Heart left ventricle (tissue), 16 donors: ENCODE measurements at regions of chr10 and their contacts with region 1.

Region 1: GRCh38 chr10:86399879-86400704 is 33.5 kb upstream of the GRID1 start:
- DNase-seq: peak; percentile 92 to 97 (median 95)
- ATAC-seq: peak; percentile 79 to 95 (median 95)
- H3K4me3 ChIP-seq: peak overlapping the region; percentile 37 to 76 (median 62)
- H3K27ac ChIP-seq: peak overlapping the region in 11 of 12 donors; percentile 9 to 89 (median 61)
- H3K4me1 ChIP-seq: peaks cover 0 to 38% (median 26%) of the 10 kb centered on the region in 12 donors
- H3K27me3 ChIP-seq: peaks cover 0 to 19% (median 0%) of the 10 kb centered on the region in 9 donors
- CTCF ChIP-seq: peak; percentile 90 to 98 (median 96)
- POLR2A ChIP-seq: no peak

Region 2: DNA sequence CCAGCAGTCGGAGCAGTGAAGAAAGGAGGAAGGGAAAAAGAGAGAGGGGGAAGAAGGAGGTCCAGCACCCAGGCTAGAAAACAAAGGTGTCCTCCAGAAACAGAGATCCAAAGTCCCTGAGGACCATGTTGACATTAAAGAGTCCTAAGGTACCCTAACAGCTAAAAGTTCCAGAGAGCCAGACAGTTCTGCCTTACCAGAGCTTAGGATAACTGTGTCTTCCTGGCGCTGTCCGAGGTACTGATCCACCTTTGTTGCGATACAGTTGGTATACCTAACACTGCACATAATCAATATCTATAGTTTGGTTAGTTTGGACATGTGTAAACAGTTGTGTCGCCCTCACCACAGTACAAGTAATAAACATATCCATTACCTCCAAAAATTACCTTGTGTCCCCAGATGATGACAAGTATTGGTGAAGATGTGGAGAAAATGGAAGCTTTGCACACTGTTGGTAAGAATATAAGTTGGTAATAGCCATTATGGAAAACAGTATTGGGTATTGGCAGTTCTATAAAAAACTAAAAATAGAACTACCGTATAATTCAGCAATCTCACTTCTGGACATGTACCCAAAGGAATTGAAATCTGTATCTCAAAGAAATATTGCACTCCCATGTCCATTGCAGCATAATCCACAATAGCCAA is 93.3 kb before region 1 on chr10:
- intact Hi-C with region 1: no loop called
- DNase-seq: no peak
- ATAC-seq: no peak
- H3K4me3 ChIP-seq: no peak overlapping the region
- H3K27ac ChIP-seq: no peak overlapping the region
- H3K4me1 ChIP-seq: no peaks in the 10 kb centered on the region
- H3K27me3 ChIP-seq: no peaks in the 10 kb centered on the region
- CTCF ChIP-seq: no peak
- POLR2A ChIP-seq: no peak

Region 3: GRCh38 chr10:86472061-86472460 is 72.0 kb after region 1 on chr10:
- intact Hi-C with region 1: no loop called
- DNase-seq: no peak
- ATAC-seq: no peak
- H3K4me3 ChIP-seq: no peak overlapping the region
- H3K27ac ChIP-seq: no peak overlapping the region
- H3K4me1 ChIP-seq: no peaks in the 10 kb centered on the region
- H3K27me3 ChIP-seq: no peaks in the 10 kb centered on the region
- CTCF ChIP-seq: no peak
- POLR2A ChIP-seq: no peak

Region 4: DNA sequence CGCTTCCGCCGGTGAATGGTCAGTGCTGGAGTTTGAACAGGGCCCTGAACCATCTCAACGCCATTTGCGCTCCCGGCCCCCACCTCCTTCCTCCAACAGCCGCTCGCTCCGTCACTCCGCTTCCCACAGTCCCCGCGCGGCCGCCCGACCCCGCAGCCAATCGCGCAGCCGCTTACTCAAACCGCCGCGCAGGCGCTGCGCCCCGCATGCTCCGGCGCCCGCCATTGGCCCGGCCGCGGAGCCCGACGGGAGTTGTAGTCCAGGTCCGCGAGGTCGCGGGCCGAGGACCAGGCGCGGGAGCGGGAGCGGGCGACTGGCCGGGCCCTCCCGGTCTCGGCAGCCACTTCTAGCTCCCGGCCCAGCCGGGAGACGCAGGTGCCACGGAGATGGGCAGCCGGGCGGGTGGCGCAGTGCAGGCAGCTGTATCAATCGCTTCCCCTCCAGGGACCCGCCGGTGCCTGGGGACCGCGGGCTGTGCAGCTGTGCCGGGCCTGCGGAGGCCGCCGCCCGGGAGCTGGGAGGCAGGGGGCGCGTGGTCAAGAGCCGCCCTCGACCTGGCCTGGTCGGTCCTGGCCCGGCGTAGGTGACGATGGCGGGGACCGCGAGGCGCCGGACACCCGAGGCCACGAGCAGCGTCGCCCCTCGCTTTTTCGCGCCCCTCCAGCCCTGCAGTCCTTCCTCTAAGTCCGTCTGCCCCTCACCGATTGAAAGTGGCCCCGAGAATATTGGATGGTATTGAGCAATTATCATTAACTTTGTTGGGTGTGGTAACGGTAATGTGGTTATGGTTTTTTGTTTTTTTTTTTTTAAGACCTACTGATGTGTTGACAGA is 121.8 kb after region 1 on chr10 and contains the start of gene WAPL:
- intact Hi-C with region 1: loop called in 1 of 10 experiments (anchors 10 kb)
- DNase-seq: peak; percentile 96 to 97 (median 97)
- ATAC-seq: peak; percentile 97 to 99 (median 98)
- H3K4me3 ChIP-seq: peak within 1 kb of the TSS; percentile 83 to 100 (median 98)
- H3K27ac ChIP-seq: peak within 1 kb of the TSS; percentile 90 to 99 (median 97)
- H3K4me1 ChIP-seq: peaks cover 0 to 69% (median 43%) of the 10 kb centered on the region in 12 donors
- H3K27me3 ChIP-seq: no peaks in the 10 kb centered on the region
- CTCF ChIP-seq: no peak
- POLR2A ChIP-seq: peak in 1 of 2 donors; percentile 86
- total RNA-seq, gene WAPL: 19.7 to 29.9 (median 23.8) TPM

Region 5: GRCh38 chr10:86573941-86574340 is 173.8 kb after region 1 on chr10:
- intact Hi-C with region 1: loop called in 1 of 10 experiments (anchors 5 kb)
- DNase-seq: no peak
- ATAC-seq: no peak
- H3K4me3 ChIP-seq: no peak overlapping the region
- H3K27ac ChIP-seq: no peak overlapping the region
- H3K4me1 ChIP-seq: no peaks in the 10 kb centered on the region
- H3K27me3 ChIP-seq: no peaks in the 10 kb centered on the region
- CTCF ChIP-seq: no peak
- POLR2A ChIP-seq: no peak

Region 6: DNA sequence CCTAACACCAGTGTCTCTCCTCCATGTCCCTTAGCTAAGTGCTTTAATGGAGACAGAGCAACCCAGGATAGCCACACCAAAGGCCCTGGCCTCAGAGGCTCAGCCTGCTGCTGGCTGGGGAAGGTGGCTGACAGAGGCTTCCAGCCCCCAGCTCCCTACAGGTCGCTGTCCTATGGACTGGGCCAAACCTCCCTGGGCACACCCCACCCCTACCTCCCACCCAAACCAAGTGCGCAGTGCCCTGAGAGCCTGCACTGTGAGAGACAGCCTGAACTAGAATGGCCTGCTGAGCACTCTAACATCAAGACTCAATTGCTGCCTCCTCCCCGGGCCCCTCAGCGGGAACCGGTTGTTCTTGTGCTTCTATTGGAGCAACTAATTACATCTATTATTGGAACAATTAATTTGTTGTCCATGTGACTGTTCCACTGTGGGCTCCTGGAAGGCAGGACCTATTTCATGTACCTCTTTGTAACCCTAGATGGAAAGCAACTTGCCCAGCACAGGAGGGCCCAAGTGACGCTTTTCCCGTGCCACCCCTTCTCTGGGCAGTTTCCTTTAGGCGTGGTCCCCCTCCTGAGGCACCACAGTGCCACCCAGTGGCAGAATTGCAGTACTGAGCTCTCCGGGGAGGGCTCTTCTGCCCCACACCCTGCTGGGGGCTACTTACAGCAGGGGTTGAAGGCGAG is 185.1 kb after region 1 on chr10:
- intact Hi-C with region 1: loop called (anchors 1 to 5 kb)
- DNase-seq: peak; percentile 59 to 79 (median 68)
- ATAC-seq: peak; percentile 67 to 94 (median 92)
- H3K4me3 ChIP-seq: peak overlapping the region in 1 of 12 donors; percentile 9
- H3K27ac ChIP-seq: peak overlapping the region in 1 of 12 donors; percentile 58
- H3K4me1 ChIP-seq: peaks cover 0 to 12% (median 4%) of the 10 kb centered on the region in 12 donors
- H3K27me3 ChIP-seq: no peaks in the 10 kb centered on the region
- CTCF ChIP-seq: peak; percentile 87 to 99 (median 94)
- POLR2A ChIP-seq: no peak